Caco-2 (cell line): ENCODE measurements at regions of chr10 and their contacts with region 1.

Region 1: GRCh38 chr10:19021175-19021574 is 27.4 kb upstream of the MALRD1 start:
- DNase-seq: peak in 1 of 2 experiments; percentile 59
- H3K4me3 ChIP-seq: no peak overlapping the region
- H3K4me3 Mint-ChIP-seq: no peak overlapping the region
- H3K27ac Mint-ChIP-seq: peak overlapping the region; percentile 87
- H3K4me1 ChIP-seq: peaks cover 25% of the 10 kb centered on the region
- H3K4me1 Mint-ChIP-seq: peaks cover 24% of the 10 kb centered on the region
- H3K27me3 ChIP-seq: no peaks in the 10 kb centered on the region
- H3K27me3 Mint-ChIP-seq: no peaks in the 10 kb centered on the region
- CTCF ChIP-seq: no peak

Region 2: GRCh38 chr10:18976696-18977251 is 44.4 kb before region 1 on chr10:
- CTCF ChIA-PET with region 1: no interaction called
- POLR2A ChIA-PET with region 1: no interaction called
- intact Hi-C with region 1: loop called (anchors 5 kb)
- DNase-seq: peak in 1 of 2 experiments; percentile 13
- H3K4me3 ChIP-seq: no peak overlapping the region
- H3K4me3 Mint-ChIP-seq: peak overlapping the region; percentile 22
- H3K27ac Mint-ChIP-seq: peak overlapping the region; percentile 12
- H3K4me1 ChIP-seq: peaks cover 34% of the 10 kb centered on the region
- H3K4me1 Mint-ChIP-seq: peaks cover 13% of the 10 kb centered on the region
- H3K27me3 ChIP-seq: no peaks in the 10 kb centered on the region
- H3K27me3 Mint-ChIP-seq: no peaks in the 10 kb centered on the region
- CTCF ChIP-seq: no peak

Region 3: GRCh38 chr10:19048901-19049300 is 27.7 kb after region 1 on chr10:
- CTCF ChIA-PET with region 1: no interaction called
- POLR2A ChIA-PET with region 1: no interaction called
- intact Hi-C with region 1: loop called (anchors 1 kb)
- DNase-seq: peak in 1 of 2 experiments; percentile 26
- H3K4me3 ChIP-seq: peak overlapping the region; percentile 27
- H3K4me3 Mint-ChIP-seq: peak overlapping the region; percentile 64
- H3K27ac Mint-ChIP-seq: peak overlapping the region; percentile 13
- H3K4me1 ChIP-seq: peaks cover 11% of the 10 kb centered on the region
- H3K4me1 Mint-ChIP-seq: peaks cover 26% of the 10 kb centered on the region
- H3K27me3 ChIP-seq: no peaks in the 10 kb centered on the region
- H3K27me3 Mint-ChIP-seq: no peaks in the 10 kb centered on the region
- CTCF ChIP-seq: no peak

Region 4: DNA sequence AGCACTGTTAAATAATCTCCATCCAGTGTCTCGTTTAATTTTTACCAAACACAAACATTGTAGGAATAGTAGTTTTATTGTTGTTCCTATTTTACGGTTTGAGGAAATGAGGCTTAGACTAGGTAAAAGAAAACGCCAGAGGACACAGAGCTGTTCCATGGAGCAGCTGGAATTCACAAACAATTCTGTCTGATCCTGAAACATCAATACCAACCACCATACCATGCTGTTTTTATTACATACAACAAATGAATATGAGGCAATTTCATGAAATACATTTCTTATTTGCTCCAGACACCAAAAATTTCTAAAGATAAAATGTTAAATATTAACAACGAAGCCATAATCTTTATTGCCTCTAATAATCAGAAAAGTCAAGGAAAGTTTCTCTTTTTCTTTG is 36.9 kb after region 1 on chr10:
- CTCF ChIA-PET with region 1: no interaction called
- POLR2A ChIA-PET with region 1: no interaction called
- intact Hi-C with region 1: loop called (anchors 1 kb)
- DNase-seq: peak in 1 of 2 experiments; percentile 24
- H3K4me3 ChIP-seq: no peak overlapping the region
- H3K4me3 Mint-ChIP-seq: no peak overlapping the region
- H3K27ac Mint-ChIP-seq: peak overlapping the region; percentile 76
- H3K4me1 ChIP-seq: no peaks in the 10 kb centered on the region
- H3K4me1 Mint-ChIP-seq: peaks cover 17% of the 10 kb centered on the region
- H3K27me3 ChIP-seq: no peaks in the 10 kb centered on the region
- H3K27me3 Mint-ChIP-seq: no peaks in the 10 kb centered on the region
- CTCF ChIP-seq: no peak